ENCODE measurements at regions of chr1 and their contacts with region 1.

Region 1: DNA sequence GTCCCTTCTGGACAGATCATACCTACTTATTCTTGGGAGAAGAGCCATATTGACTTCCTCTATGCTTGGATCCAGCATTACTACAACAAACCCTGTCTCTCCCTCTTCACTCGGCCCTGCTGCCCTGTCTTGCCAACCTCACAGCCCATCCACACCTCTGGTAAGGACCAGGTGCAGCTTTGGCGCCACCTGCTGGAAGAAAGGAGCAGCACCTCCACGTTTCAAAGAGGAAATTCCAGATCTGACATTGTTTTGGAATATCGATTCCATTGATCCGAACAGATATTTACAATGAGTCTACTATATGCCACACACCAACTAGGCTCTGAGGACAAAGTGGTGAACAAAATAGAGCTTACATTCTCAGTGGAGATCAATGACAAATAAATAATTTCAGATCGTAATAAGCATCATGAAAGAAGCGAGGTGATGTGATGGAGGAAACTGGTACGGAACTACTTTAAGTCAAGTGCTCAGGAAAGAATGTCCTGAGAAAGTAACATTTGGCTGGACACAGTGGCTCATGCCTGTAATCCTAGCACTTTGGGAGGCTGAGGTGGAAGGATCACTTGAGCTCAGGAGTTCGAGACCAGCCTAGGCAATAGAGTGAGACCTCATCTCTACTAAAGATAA is 18.7 kb downstream of the MFSD2A start:
- DNase-seq: peak; percentile 82
- ATAC-seq: peak; percentile 80
- H3K4me3 ChIP-seq: no peak overlapping the region
- H3K4me3 Mint-ChIP-seq: peak overlapping the region; percentile 14
- H3K27ac ChIP-seq: no peak overlapping the region
- H3K27ac Mint-ChIP-seq: no peak overlapping the region
- H3K4me1 ChIP-seq: peaks cover 5 to 7% of the 10 kb centered on the region in 2 donors
- H3K4me1 Mint-ChIP-seq: peaks cover 8% of the 10 kb centered on the region
- H3K27me3 ChIP-seq: no peaks in the 10 kb centered on the region
- H3K27me3 Mint-ChIP-seq: no peaks in the 10 kb centered on the region
- CTCF ChIP-seq: peak; percentile 97

Region 2: DNA sequence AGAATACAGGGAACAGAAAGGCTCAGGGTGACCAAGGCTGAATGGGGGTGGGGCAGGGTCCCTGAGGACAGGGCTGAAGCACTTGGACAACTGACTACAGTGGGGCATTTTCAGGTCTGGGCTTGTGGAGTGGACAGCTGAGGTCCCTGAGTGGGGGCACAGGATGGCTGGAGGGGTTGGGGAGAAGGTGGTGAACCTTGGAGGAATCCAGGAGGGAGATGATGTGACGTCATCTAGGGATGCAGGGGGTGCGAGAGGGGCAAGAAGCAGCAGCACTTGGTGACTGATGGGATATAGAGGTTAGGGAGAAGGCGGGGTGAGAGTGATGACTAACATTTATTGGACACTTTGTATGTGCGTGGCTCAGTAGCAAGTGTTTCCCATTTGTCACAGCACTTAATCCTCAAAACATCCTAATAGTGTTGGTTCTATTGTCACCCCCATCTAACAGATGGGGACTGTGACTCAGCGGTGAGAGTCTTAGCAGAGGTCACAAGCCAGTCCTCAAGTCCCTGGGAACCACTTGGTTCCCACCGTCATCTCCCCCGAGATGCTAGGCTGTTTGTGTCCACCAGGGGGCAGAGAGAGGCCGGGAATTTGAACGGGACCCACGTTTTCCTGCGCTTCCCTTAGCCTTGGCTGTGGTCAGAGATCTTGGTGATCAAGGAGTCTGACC is 157.1 kb before region 1 on chr1:
- CTCF ChIA-PET with region 1: interaction called, 80 read pairs
- POLR2A ChIA-PET with region 1: no interaction called
- intact Hi-C with region 1: no loop called
- DNase-seq: peak; percentile 80
- ATAC-seq: peak; percentile 61
- H3K4me3 ChIP-seq: peak overlapping the region in 4 of 5 experiments; percentile 25 to 45 (median 28)
- H3K4me3 Mint-ChIP-seq: peak overlapping the region; percentile 78
- H3K27ac ChIP-seq: no peak overlapping the region
- H3K27ac Mint-ChIP-seq: peak overlapping the region; percentile 38
- H3K4me1 ChIP-seq: peaks cover 6 to 15% of the 10 kb centered on the region in 2 donors
- H3K4me1 Mint-ChIP-seq: peaks cover 10% of the 10 kb centered on the region
- H3K27me3 ChIP-seq: no peaks in the 10 kb centered on the region
- H3K27me3 Mint-ChIP-seq: no peaks in the 10 kb centered on the region
- CTCF ChIP-seq: peak; percentile 78

Region 3: DNA sequence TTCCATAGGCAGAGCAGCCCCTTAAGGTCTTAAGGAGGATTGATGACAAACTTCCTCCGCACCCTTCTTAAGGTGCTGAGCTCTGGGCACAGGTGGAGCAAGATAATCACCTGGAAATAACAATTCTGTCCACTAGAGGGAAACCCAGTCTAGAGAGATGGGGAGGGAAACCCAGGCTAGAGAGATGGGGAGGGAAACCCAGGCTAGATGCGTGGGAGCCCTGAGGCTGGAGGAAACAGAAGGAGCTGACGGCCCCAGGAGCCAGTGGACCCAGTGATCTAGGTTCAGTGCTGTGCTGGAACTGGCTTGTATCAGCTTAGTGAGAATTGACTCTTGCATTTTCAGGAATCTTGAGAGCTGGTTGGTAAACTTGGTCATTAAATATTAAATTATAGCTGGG is 54.1 kb before region 1 on chr1:
- CTCF ChIA-PET with region 1: interaction called, 334 read pairs
- POLR2A ChIA-PET with region 1: interaction called, 8 read pairs
- intact Hi-C with region 1: no loop called
- DNase-seq: peak; percentile 83
- ATAC-seq: peak; percentile 98
- H3K4me3 ChIP-seq: no peak overlapping the region
- H3K4me3 Mint-ChIP-seq: no peak overlapping the region
- H3K27ac ChIP-seq: no peak overlapping the region
- H3K27ac Mint-ChIP-seq: no peak overlapping the region
- H3K4me1 ChIP-seq: peaks cover 0 to 4% of the 10 kb centered on the region in 2 donors
- H3K4me1 Mint-ChIP-seq: no peaks in the 10 kb centered on the region
- H3K27me3 ChIP-seq: no peaks in the 10 kb centered on the region
- H3K27me3 Mint-ChIP-seq: peaks cover 8% of the 10 kb centered on the region
- CTCF ChIP-seq: peak; percentile 75

Region 4: GRCh38 chr1:39954816-39955546 is 18.6 kb before region 1 on chr1 and contains the start of gene MFSD2A:
- CTCF ChIA-PET with region 1: interaction called, 9 read pairs
- POLR2A ChIA-PET with region 1: no interaction called
- intact Hi-C with region 1: loop called (anchors 2 kb)
- DNase-seq: peak; percentile 91
- ATAC-seq: peak; percentile 98
- H3K4me3 ChIP-seq: peak within 1 kb of the TSS; percentile 45 to 94 (median 67)
- H3K4me3 Mint-ChIP-seq: peak within 1 kb of the TSS; percentile 90
- H3K27ac ChIP-seq: peak within 1 kb of the TSS; percentile 27 to 48
- H3K27ac Mint-ChIP-seq: peak within 1 kb of the TSS; percentile 84
- H3K4me1 ChIP-seq: peaks cover 15 to 30% of the 10 kb centered on the region in 2 donors
- H3K4me1 Mint-ChIP-seq: peaks cover 37% of the 10 kb centered on the region
- H3K27me3 ChIP-seq: no peaks in the 10 kb centered on the region
- H3K27me3 Mint-ChIP-seq: peaks cover under 1% of the 10 kb centered on the region
- CTCF ChIP-seq: no peak
- total RNA-seq, gene MFSD2A: 3.9 TPM in 2 replicates

Region 5: GRCh38 chr1:40032240-40032891 is 58.7 kb after region 1 on chr1:
- CTCF ChIA-PET with region 1: interaction called, 85 read pairs
- POLR2A ChIA-PET with region 1: no interaction called
- intact Hi-C with region 1: loop called (anchors 1 kb)
- DNase-seq: peak; percentile 72
- ATAC-seq: peak; percentile 45
- H3K4me3 ChIP-seq: no peak overlapping the region
- H3K4me3 Mint-ChIP-seq: no peak overlapping the region
- H3K27ac ChIP-seq: no peak overlapping the region
- H3K27ac Mint-ChIP-seq: peak overlapping the region; percentile 48
- H3K4me1 ChIP-seq: peaks cover 47 to 58% of the 10 kb centered on the region in 2 donors
- H3K4me1 Mint-ChIP-seq: peaks cover 44% of the 10 kb centered on the region
- H3K27me3 ChIP-seq: no peaks in the 10 kb centered on the region
- H3K27me3 Mint-ChIP-seq: no peaks in the 10 kb centered on the region
- CTCF ChIP-seq: peak; percentile 85

Region 6: DNA sequence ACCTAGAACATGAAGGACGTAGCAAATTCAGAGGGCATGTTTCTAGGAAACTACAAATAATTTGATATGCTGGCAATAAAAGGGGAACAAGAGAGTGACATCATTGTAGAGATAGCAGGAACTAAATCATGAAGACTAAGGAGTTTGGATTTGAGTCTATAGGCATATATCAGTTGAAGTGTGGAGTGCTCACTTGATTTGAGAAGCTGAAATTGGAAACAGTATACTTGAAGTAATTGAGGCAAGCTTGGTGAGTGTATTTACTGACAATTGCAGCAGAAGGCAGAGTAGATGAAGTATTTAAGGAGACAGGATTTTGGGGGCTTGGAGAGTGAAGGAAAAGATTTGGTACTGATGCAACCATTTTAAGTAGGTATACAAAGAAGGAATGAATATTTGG is 267.7 kb after region 1 on chr1:
- CTCF ChIA-PET with region 1: no interaction called
- POLR2A ChIA-PET with region 1: no interaction called
- intact Hi-C with region 1: no loop called
- DNase-seq: no peak
- ATAC-seq: no peak
- H3K4me3 ChIP-seq: no peak overlapping the region
- H3K4me3 Mint-ChIP-seq: no peak overlapping the region
- H3K27ac ChIP-seq: no peak overlapping the region
- H3K27ac Mint-ChIP-seq: peak overlapping the region; percentile 4
- H3K4me1 ChIP-seq: no peaks in the 10 kb centered on the region
- H3K4me1 Mint-ChIP-seq: peaks cover 8% of the 10 kb centered on the region
- H3K27me3 ChIP-seq: no peaks in the 10 kb centered on the region
- H3K27me3 Mint-ChIP-seq: no peaks in the 10 kb centered on the region
- CTCF ChIP-seq: no peak

Region 7: GRCh38 chr1:40984066-40984465 is 1010.4 kb after region 1 on chr1:
- CTCF ChIA-PET with region 1: no interaction called
- POLR2A ChIA-PET with region 1: no interaction called
- intact Hi-C with region 1: no loop called
- DNase-seq: no peak
- ATAC-seq: no peak
- H3K4me3 ChIP-seq: no peak overlapping the region
- H3K4me3 Mint-ChIP-seq: no peak overlapping the region
- H3K27ac ChIP-seq: no peak overlapping the region
- H3K27ac Mint-ChIP-seq: no peak overlapping the region
- H3K4me1 ChIP-seq: peaks cover 10 to 13% of the 10 kb centered on the region in 2 donors
- H3K4me1 Mint-ChIP-seq: peaks cover 15% of the 10 kb centered on the region
- H3K27me3 ChIP-seq: no peaks in the 10 kb centered on the region
- H3K27me3 Mint-ChIP-seq: no peaks in the 10 kb centered on the region
- CTCF ChIP-seq: no peak